ENCODE measurements at regions of chr11 and their contacts with region 1.

Region 1: GRCh38 chr11:3854977-3855807 is at the start of gene STIM1:
- H3K4me3 Mint-ChIP-seq: peak within 1 kb of the TSS; percentile 100
- H3K27ac Mint-ChIP-seq: peak within 1 kb of the TSS; percentile 99
- H3K4me1 Mint-ChIP-seq: peaks cover 57% of the 10 kb centered on the region
- H3K27me3 Mint-ChIP-seq: no peaks in the 10 kb centered on the region

Region 2: DNA sequence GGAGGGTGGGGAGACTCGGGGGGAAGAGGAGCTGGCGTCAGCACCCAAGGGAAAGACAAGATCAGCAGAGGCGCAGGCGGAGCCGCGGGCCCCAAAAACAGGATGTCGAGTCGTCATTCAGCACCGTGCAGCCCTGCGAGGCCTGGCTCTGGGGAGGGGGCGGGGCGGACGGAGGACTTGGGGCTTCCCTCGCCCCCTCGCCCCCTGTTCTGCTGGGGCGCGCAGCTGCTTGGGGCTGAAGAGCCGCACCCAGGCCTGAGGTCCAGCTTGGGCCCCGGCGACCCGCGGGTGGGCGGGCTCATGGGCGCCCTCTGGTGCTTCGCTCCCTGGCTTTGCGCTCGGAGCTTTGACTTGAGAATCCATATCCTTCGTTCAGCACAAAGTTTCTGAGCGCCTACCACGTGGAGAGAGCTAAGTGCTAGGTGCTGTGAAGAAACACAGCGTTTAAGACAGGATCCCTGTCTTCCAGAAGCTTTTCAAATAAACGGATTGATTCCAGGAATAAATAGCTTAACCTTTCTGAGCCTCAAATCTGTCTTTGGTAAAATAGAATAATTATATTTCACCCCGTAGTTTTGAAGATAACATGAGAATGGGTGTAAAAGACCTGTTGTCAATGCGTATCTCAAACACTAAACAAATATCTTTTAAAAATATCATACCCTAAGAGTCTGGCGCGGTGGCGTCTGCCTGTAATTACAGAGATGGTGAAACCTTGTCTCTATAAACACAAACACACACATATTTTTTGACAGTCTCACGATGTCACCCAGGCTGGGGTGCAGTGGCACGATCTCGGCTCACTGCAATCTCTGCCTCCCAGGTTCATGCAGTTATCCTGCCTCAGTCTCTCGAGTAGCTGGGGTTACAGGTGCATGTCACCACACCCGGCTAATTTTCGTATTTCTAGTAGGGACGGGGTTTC is 13.5 kb before region 1 on chr11:
- intact Hi-C with region 1: loop called (anchors 2 kb)
- H3K4me3 Mint-ChIP-seq: peak overlapping the region; percentile 91
- H3K27ac Mint-ChIP-seq: peak overlapping the region; percentile 100
- H3K4me1 Mint-ChIP-seq: peaks cover 48% of the 10 kb centered on the region
- H3K27me3 Mint-ChIP-seq: no peaks in the 10 kb centered on the region

Region 3: GRCh38 chr11:3903207-3903896 is 48.2 kb after region 1 on chr11:
- intact Hi-C with region 1: loop called (anchors 5 kb)
- H3K4me3 Mint-ChIP-seq: no peak overlapping the region
- H3K27ac Mint-ChIP-seq: no peak overlapping the region
- H3K4me1 Mint-ChIP-seq: peaks cover 51% of the 10 kb centered on the region
- H3K27me3 Mint-ChIP-seq: no peaks in the 10 kb centered on the region

Region 4: DNA sequence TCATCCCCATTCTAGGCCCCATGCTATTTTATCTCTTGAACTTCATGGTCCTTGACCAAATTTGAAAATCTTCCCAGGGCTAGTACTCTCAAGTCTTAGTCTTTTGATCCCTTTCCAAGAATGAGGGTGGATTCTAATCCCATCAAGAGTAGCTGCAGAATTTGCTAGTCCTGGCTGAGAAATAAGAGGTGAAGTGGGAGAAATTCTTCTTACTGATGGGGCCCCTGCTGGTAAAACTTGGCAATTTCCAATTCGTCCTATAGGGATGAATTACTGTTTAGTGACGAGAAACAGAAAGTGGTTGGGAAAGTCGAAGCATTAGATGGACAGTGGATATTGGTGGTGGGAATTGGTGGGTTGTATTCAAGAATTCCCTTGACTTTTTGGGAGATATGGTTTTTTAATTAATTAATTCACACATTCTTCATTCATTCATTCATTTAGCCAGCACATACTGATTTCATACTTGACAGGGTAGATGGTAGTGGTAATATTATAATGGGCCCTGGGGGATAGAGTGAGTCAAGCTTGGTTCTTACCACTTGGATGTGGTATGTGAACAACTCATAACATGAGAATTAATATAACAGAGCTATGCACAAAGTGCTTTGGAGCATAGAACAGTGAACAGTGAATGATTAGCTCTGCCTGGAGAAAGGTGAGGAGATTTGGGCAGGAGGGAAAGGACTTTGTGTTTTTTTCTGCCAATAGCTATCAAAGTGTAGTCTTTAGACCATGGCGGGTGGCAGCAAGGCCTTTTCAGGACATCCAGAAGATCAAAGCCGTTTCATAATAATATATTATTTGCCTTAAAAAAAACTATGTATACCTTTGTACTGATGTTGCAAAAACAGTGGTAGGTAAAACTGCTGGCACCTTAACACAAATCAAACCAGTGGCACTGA is 104.1 kb after region 1 on chr11:
- intact Hi-C with region 1: loop called (anchors 10 kb)
- H3K4me3 Mint-ChIP-seq: no peak overlapping the region
- H3K27ac Mint-ChIP-seq: no peak overlapping the region
- H3K4me1 Mint-ChIP-seq: peaks cover 28% of the 10 kb centered on the region
- H3K27me3 Mint-ChIP-seq: no peaks in the 10 kb centered on the region

Region 5: DNA sequence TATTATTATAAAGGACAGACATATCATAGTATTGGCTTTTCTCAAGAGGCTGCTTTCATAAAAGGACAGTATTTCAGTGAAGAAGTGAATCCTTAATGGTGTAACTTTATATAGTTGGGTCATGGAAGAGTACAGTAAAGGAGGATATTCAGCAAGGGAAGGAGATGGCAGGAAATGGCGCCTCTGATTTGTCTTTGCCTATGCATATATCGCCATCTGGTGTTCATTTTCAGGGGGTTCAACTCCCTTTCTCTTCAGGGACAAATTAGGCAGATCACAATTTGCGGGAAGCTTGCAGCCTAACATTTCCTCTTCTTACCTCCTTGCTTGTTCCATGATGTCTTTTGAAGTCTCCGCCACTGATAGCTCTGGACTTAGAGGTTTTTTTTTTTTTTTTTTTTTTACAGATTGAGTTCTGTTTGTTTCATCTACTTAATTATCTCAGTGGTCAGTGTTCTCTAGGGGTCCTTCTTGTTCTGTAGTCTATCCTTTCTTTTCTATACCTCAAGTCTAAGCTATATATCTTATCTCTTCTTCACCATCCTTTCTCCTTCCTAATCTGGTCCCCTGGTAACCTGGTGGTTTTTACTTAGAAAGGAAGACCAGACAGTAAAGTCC is 217.6 kb after region 1 on chr11:
- intact Hi-C with region 1: loop called (anchors 1 kb)
- H3K4me3 Mint-ChIP-seq: no peak overlapping the region
- H3K27ac Mint-ChIP-seq: no peak overlapping the region
- H3K4me1 Mint-ChIP-seq: peaks cover 26% of the 10 kb centered on the region
- H3K27me3 Mint-ChIP-seq: no peaks in the 10 kb centered on the region